ENCODE measurements at regions of chr5 and their contacts with region 1.

Region 1: DNA sequence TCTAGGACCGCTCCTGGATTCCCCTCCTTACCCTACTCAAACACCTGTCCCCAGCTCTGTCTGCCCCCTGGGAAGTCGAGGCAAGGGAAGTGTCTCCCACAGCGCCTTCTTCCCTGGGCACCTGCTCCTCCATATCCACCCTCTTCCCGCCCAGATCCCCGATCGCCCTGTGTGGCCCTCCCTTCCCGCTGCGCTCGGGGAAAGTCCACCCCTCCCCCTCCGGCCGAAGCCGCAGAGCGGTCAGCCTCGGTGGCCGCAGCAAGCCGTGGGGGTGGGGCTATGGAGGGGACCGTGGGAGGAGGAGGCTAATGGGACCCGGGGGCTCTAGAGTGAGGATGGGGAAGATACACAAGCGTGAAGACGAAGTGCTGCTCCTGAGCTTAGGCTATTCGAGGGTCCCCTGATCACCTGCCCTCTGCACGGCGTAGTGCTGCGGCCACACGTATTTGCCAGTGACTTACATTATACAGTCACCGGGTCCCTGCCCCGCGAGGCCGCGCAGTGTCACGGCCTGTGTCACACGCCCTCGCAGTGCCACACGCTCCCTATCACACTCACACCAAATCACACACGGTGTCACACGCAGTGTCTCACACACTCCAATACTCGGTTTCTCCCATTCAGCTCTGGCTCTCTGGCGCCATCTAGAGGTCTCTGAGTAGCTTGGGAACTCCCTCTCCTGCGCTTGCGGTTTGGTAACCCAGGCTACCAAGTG is 658 bp upstream of the PCDH1 start:
- DNase-seq: peak; percentile 93 to 96
- H3K4me3 ChIP-seq: peak overlapping the region; percentile 68
- H3K27ac ChIP-seq: peak overlapping the region; percentile 82
- H3K4me1 ChIP-seq: peaks cover 43% of the 10 kb centered on the region
- H3K27me3 ChIP-seq: no peaks in the 10 kb centered on the region
- CTCF ChIP-seq: peak; percentile 96

Region 2: GRCh38 chr5:141691867-141692532 is 186.9 kb before region 1 on chr5:
- CTCF ChIA-PET with region 1: interaction called, 10 read pairs
- POLR2A ChIA-PET with region 1: interaction called, 7 read pairs
- intact Hi-C with region 1: loop called (anchors 1 kb)
- DNase-seq: peak; percentile 71 to 89
- H3K4me3 ChIP-seq: peak overlapping the region; percentile 46; the same call in 1 of the 2 replicates
- H3K27ac ChIP-seq: no peak overlapping the region
- H3K4me1 ChIP-seq: peaks cover 48% of the 10 kb centered on the region
- H3K27me3 ChIP-seq: no peaks in the 10 kb centered on the region
- CTCF ChIP-seq: peak; percentile 93

Region 3: DNA sequence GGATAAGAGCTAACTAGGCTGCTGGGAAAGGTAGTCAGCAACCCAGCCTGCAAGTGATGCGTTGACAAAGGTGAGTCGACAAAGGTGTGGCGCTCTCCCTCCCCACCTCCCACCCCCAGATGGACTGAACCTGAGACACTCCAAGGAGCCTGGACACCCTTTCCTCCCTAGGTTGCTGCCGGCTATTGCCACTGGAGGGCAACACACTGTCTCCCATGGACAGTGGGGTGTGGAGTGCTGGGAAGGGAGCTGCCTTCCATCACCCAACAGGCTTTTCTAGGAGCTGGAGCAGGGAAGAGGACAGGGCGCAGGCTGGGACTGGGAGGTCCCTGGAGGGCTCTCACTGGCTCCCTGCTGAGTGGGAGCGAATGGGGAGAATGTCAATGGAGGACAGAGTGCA is 121.5 kb before region 1 on chr5:
- CTCF ChIA-PET with region 1: interaction called, 19 read pairs
- POLR2A ChIA-PET with region 1: no interaction called
- intact Hi-C with region 1: loop called (anchors 1 kb)
- DNase-seq: peak; percentile 64 to 75
- H3K4me3 ChIP-seq: no peak overlapping the region
- H3K27ac ChIP-seq: no peak overlapping the region
- H3K4me1 ChIP-seq: peaks cover 14% of the 10 kb centered on the region
- H3K27me3 ChIP-seq: no peaks in the 10 kb centered on the region
- CTCF ChIP-seq: peak; percentile 74

Region 4: GRCh38 chr5:141835928-141836670 is 42.8 kb before region 1 on chr5:
- CTCF ChIA-PET with region 1: no interaction called
- POLR2A ChIA-PET with region 1: no interaction called
- intact Hi-C with region 1: loop called (anchors 5 kb)
- DNase-seq: no peak
- H3K4me3 ChIP-seq: no peak overlapping the region
- H3K27ac ChIP-seq: no peak overlapping the region
- H3K4me1 ChIP-seq: peaks cover 44% of the 10 kb centered on the region
- H3K27me3 ChIP-seq: no peaks in the 10 kb centered on the region
- CTCF ChIP-seq: no peak

Region 5: DNA sequence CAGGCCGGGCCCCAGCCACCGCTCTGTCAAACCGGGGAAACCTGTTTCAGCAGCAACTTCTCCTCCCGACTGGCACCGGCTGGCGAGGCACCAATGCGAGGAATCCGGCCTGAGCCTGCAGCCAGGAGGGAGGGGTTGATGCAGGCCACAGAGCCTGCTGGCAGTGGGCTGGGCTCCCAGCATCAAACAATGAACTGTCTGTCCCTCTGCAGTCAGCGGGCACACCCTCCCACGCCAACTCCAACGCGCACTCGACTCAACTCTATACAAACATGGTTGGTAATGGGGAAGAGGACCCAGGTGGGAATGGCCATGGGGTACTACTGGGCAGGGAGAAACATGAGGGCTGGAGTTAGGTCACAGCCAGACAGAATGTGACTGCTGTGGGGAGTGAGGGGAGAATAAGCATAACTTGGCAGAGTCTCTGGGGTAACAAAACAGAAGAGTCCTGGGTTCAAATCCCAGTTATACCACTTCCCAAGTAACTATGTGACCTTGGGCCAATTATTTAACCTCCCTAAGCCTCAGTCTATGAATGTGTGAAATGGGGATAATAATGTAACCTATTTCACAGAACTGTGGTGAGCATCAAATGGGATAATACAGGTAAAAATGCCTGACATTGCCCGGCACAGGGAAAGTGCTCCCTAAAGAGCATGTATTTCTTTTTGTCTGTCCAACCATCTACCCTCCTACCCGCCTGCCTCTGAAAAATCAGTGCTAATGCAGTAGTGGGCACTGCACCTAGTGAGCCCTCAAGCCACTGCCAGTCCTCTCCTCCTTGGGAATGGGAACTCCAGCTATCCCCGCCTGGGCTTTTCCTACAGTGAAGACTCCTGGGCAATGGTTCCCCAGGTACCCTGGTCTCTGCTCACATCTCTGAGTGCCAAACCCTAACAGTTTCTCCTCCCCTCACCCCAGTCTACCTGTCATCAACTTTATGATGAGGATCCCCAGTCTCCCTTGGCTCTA is 12.4 kb before region 1 on chr5:
- CTCF ChIA-PET with region 1: interaction called, 5 read pairs
- POLR2A ChIA-PET with region 1: interaction called, 8 read pairs
- intact Hi-C with region 1: loop called (anchors 1 kb)
- DNase-seq: peak; percentile 95 to 96
- H3K4me3 ChIP-seq: peak overlapping the region; percentile 1; the same call in 1 of the 2 replicates
- H3K27ac ChIP-seq: peak overlapping the region; percentile 78
- H3K4me1 ChIP-seq: peaks cover 71% of the 10 kb centered on the region
- H3K27me3 ChIP-seq: no peaks in the 10 kb centered on the region
- CTCF ChIP-seq: no peak

Region 6: DNA sequence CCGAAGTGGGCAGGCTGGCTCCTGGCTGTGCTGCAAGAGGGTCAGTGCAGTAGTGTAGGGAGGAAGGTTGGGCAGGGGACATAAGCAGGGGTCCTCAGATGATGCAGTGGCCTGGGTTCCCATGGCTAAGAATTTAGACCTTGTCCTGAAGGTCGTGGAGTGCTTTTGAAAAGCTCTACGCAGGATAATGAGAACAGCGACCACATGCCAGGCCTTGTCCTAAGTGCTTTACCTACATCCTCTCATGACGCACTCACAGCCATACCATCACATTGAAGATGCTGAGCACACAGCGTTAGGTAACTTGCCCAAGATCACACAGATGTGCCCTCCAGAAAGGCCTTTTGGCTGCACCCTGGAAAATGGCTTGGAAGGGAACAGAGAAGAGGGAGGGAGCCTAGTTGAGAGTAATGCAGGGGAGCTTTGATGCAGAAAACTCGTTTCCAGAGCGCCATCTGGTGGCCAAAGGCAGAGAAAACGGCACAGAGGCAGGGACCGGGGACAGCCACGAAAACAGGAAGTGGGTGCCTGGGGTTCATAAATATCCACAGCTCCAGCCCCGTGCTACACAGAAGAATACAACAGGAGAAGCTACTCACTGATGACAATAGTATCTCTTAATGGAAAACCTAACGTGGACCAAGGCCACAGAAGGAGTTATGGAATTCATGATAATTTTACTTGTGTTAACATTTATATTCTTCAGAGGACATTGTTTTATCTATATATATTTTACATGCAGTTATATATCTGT is 81.8 kb after region 1 on chr5:
- CTCF ChIA-PET with region 1: no interaction called
- POLR2A ChIA-PET with region 1: interaction called, 3 read pairs
- intact Hi-C with region 1: loop called (anchors 1 kb)
- DNase-seq: peak; percentile 69 to 83
- H3K4me3 ChIP-seq: no peak overlapping the region
- H3K27ac ChIP-seq: no peak overlapping the region
- H3K4me1 ChIP-seq: peaks cover 11% of the 10 kb centered on the region
- H3K27me3 ChIP-seq: no peaks in the 10 kb centered on the region
- CTCF ChIP-seq: peak; percentile 90

Region 7: GRCh38 chr5:141976176-141976575 is 97.3 kb after region 1 on chr5:
- CTCF ChIA-PET with region 1: no interaction called
- POLR2A ChIA-PET with region 1: no interaction called
- intact Hi-C with region 1: no loop called
- DNase-seq: no peak
- H3K4me3 ChIP-seq: no peak overlapping the region
- H3K27ac ChIP-seq: no peak overlapping the region
- H3K4me1 ChIP-seq: 0 out of 2 replicates have a peak, but pooled peaks cover under 1% of the 10 kb centered on the region
- H3K27me3 ChIP-seq: no peaks in the 10 kb centered on the region
- CTCF ChIP-seq: no peak